ENCODE measurements at regions of chr3 and their contacts with region 1.

Region 1: GRCh38 chr3:126197854-126198584 is 17.6 kb upstream of the ALDH1L1 start:
- DNase-seq: peak; percentile 63 to 72
- ATAC-seq: peak; percentile 95 to 97
- H3K4me3 ChIP-seq: no peak overlapping the region
- H3K27ac ChIP-seq: no peak overlapping the region
- H3K4me1 ChIP-seq: no peaks in the 10 kb centered on the region
- CTCF ChIP-seq: peak; percentile 40
- EP300 ChIP-seq: no peak
- POLR2A ChIP-seq: no peak
- RAD21 ChIP-seq: peak in 1 of 2 experiments; percentile 44; a peak in 2 of 5 replicates

Region 2: DNA sequence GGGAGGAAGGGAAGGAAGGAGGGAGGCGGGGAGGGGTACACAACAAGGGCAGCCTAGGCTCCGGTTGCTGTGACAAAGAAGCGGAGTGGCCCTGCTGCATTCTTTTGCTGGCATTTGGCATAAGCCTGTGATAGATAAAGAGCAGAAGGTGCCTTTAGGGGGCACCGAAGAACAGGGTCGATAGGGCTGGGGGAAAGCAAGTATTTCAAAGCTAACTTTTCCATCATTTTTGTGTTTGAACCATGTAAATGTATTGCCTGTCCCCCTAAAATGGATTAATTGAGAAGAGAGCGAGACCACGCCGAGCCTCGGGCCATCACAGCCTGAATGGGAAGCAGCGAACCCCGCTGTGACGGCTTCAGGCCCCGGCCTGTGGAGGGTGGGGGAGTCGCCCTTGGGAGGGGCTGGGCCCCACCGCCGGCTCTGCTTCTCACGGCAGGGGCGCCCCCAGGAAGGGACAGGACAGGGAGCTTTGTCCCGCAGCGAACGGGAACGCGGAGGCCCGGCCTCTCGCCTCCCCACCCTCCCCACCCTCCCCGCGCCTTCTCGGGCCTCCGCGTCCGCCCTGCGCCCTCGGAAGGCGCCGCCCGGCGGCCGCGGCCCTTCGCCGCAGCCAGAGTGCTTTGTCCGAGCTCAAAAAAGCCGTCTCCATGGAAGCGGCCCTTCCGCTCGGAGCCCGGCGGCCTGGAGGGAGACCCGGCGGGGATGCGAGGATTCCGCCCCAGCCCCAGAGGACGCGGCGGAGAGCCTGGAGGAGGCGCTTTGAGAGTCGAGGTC is 14.8 kb after region 1 on chr3:
- CTCF ChIA-PET with region 1: interaction called, 13 read pairs
- POLR2A ChIA-PET with region 1: no interaction called
- DNase-seq: peak; percentile 21 to 51
- ATAC-seq: peak; percentile 86 to 91
- H3K4me3 ChIP-seq: peak overlapping the region; percentile 42
- H3K27ac ChIP-seq: peak overlapping the region; percentile 69 to 85
- H3K4me1 ChIP-seq: peaks cover 25% of the 10 kb centered on the region
- CTCF ChIP-seq: peak; percentile 47
- EP300 ChIP-seq: no peak
- POLR2A ChIP-seq: no peak
- RAD21 ChIP-seq: peak in 1 of 2 experiments; percentile 39; a peak in 1 of 5 replicates

Region 3: DNA sequence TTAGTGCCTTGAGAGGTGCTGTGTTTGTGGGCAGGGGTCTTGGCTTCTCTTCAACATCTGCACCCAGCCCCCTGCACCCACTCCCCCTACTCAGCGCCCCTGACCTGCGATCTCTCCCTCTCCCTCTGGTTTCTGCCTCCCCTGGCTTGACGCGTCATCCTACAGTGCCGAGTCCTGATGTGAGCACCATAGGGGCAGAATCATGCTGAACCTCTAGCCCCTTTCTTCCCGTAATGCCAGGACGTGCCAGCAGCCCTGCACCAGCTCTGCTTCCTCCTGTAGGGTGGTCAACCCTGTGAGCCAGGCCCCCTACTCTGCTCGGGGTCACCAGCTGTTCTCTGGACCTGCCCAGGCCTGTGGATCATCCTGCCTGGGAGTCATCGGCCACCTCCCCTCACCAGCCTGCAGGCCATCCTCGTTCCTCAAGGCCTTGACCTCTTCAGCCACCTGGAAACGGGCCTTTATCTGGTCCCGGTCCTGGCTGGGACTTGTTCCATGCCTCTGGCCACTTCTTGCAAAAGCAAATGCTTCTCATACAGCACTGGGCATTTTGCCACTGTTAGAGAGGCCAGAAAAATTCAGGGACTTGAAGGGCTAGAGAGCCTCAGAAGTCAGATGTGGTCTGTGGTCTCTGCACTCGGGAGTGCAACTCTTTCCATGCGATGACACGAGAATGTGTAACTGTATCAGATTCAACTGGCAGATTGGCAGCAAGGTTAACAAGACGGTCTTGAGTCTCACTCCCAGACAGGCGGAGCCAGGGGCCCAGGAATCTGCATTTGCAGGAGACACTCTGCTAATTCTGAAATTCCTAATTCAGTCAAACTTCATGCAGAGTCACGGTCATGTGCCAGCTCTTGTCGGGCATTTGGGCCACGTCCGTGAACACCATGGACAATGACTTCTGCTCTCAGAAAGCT is 175.9 kb after region 1 on chr3:
- CTCF ChIA-PET with region 1: no interaction called
- POLR2A ChIA-PET with region 1: no interaction called
- DNase-seq: no peak
- ATAC-seq: no peak
- H3K4me3 ChIP-seq: no peak overlapping the region
- H3K27ac ChIP-seq: no peak overlapping the region
- H3K4me1 ChIP-seq: no peaks in the 10 kb centered on the region
- CTCF ChIP-seq: no peak
- EP300 ChIP-seq: no peak
- POLR2A ChIP-seq: no peak
- RAD21 ChIP-seq: no peak

Region 4: GRCh38 chr3:126607214-126607908 is 409.3 kb after region 1 on chr3:
- CTCF ChIA-PET with region 1: no interaction called
- POLR2A ChIA-PET with region 1: no interaction called
- DNase-seq: no peak
- ATAC-seq: no peak
- H3K4me3 ChIP-seq: no peak overlapping the region
- H3K27ac ChIP-seq: peak overlapping the region in 1 of 2 experiments; percentile 55; a peak in 1 of 6 replicates
- H3K4me1 ChIP-seq: peaks cover 6% of the 10 kb centered on the region; the same call in 2 of the 3 replicates
- CTCF ChIP-seq: no peak
- EP300 ChIP-seq: no peak
- POLR2A ChIP-seq: no peak
- RAD21 ChIP-seq: no peak